Activated T-helper 1 cell treated with anti-CD3 and anti-CD28 coated beads, Interleukin-12 subunit alpha, Interleukin-12 subunit beta, Interleukin-2, Interleukin-4 antibody, amounts not matched to agents 30 ng/mL and 10 ng/mL and 1 ng/mL, durations not matched to agents 14 hours and 24 hours and 36 hours (primary cell): ENCODE measurements at regions of chr2 and their contacts with region 1.

Region 1: GRCh38 chr2:113390124-113390849 is 47.2 kb upstream of the ZNG1B start:
- DNase-seq: peak; percentile 48
- H3K4me3 Mint-ChIP-seq: peak overlapping the region; percentile 53
- H3K27ac Mint-ChIP-seq: peak overlapping the region; percentile 65
- H3K4me1 Mint-ChIP-seq: peaks cover 16% of the 10 kb centered on the region
- H3K27me3 Mint-ChIP-seq: peaks cover 29% of the 10 kb centered on the region

Region 2: GRCh38 chr2:112275306-112275886 is 1114.9 kb before region 1 on chr2 and contains the start of gene ZC3H6:
- intact Hi-C with region 1: no loop called
- DNase-seq: peak; percentile 99
- H3K4me3 Mint-ChIP-seq: peak within 1 kb of the TSS; percentile 91
- H3K27ac Mint-ChIP-seq: peak within 1 kb of the TSS; percentile 97
- H3K4me1 Mint-ChIP-seq: peaks cover 13% of the 10 kb centered on the region
- H3K27me3 Mint-ChIP-seq: peaks cover 2% of the 10 kb centered on the region
- total RNA-seq, gene ZC3H6: 3.3 and 4.3 TPM in 2 replicates

Region 3: DNA sequence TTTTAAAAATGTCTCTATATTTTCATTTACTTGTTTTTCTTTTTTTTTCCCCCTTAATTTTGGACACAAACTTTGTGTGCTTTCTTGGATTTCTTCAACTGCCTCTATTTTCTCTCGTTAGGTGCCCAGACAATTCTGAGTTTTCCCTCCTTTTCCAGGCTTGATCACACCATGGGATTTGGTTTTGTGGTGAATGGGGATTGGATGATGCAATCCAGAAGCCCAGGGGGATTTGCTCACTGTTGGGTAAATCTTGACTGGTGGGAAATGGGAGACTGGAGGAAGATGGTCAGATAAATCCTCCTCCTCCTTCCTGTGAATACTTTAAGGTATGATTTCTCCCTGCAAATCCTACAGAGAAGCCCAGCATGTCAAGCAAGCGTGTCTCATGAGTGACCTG is 92.1 kb before region 1 on chr2:
- intact Hi-C with region 1: loop called (anchors 5 kb)
- DNase-seq: no peak
- H3K4me3 Mint-ChIP-seq: no peak overlapping the region
- H3K27ac Mint-ChIP-seq: no peak overlapping the region
- H3K4me1 Mint-ChIP-seq: no peaks in the 10 kb centered on the region
- H3K27me3 Mint-ChIP-seq: peaks cover 21% of the 10 kb centered on the region